ENCODE measurements at regions of chr6 and their contacts with region 1.

Region 1: GRCh38 chr6:43506667-43507471 is 3.3 kb downstream of the LRRC73 start:
- DNase-seq: peak; percentile 51
- ATAC-seq: peak; percentile 87
- H3K4me3 ChIP-seq: no peak overlapping the region
- H3K27ac ChIP-seq: no peak overlapping the region
- H3K4me1 ChIP-seq: peaks cover 4% of the 10 kb centered on the region; the same call in 1 of the 2 replicates
- H3K27me3 ChIP-seq: peaks cover 0 to 2% of the 10 kb centered on the region in 2 experiments; a peak in 1 of 4 replicates
- CTCF ChIP-seq: peak; percentile 91 to 97 (median 96); a peak in 5 of 6 replicates
- EP300 ChIP-seq: no peak
- POLR2A ChIP-seq: no peak
- RAD21 ChIP-seq: peak; percentile 80

Region 2: GRCh38 chr6:42652024-42652746 is 854.7 kb before region 1 on chr6:
- CTCF ChIA-PET with region 1: no interaction called
- POLR2A ChIA-PET with region 1: no interaction called
- RAD21 ChIA-PET with region 1: no interaction called
- SMC1A ChIA-PET with region 1: no interaction called
- in situ Hi-C with region 1: no loop called
- intact Hi-C with region 1: no loop called
- DNase-seq: no peak
- ATAC-seq: no peak
- H3K4me3 ChIP-seq: no peak overlapping the region
- H3K27ac ChIP-seq: no peak overlapping the region
- H3K4me1 ChIP-seq: no peaks in the 10 kb centered on the region
- H3K27me3 ChIP-seq: no peaks in the 10 kb centered on the region
- CTCF ChIP-seq: no peak
- EP300 ChIP-seq: no peak
- POLR2A ChIP-seq: no peak
- RAD21 ChIP-seq: no peak

Region 3: DNA sequence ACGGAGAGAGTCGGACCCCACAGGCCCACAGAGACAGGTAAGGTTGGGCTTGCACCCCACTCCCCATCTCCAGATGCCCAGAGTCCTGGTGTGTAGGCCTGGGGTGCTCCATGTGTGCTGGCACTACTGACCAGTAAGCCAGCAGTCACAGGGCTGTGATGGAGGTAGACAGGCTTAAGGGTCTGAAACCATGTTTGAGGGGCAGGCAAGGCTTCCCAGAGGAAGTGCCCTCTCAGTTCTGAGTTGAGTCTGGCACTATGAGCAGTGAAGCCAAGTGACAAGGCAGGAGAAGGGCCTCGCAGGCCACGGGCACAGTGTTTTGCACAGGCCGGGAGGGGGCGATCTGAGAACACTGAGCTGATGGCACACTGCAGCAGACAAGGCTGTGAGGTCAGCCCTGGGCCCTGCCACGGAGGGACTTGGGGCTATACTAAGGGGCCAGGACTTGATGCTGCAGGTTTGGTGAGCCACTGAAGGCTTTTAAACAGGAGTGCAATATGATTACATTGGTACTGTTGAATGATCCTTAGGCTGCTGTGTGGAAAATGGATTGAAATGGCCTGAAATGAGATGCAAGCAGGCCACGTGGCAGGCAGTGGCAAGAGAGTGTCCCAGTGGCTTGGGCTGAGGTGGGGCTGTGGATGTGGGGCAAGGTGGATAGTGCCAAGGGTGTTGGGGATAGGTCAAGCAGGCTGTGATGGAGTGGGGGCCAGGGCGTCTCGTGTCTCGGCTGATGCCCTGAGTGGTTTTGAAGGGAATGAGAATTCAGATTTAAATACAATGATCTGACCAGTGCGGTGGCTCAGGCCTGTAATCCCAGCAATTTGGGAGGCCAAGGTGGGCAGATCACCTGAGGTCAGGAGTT is 243.3 kb before region 1 on chr6:
- CTCF ChIA-PET with region 1: interaction called, 33 read pairs
- POLR2A ChIA-PET with region 1: interaction called, 3 read pairs
- RAD21 ChIA-PET with region 1: interaction called, 44 read pairs
- SMC1A ChIA-PET with region 1: interaction called, 16 read pairs
- in situ Hi-C with region 1: loop called (anchors 5 kb)
- intact Hi-C with region 1: loop called (anchors 1 kb)
- DNase-seq: peak; percentile 46
- ATAC-seq: peak; percentile 99
- H3K4me3 ChIP-seq: no peak overlapping the region
- H3K27ac ChIP-seq: no peak overlapping the region
- H3K4me1 ChIP-seq: peaks cover 2% of the 10 kb centered on the region; the same call in 1 of the 2 replicates
- H3K27me3 ChIP-seq: no peaks in the 10 kb centered on the region; a peak in 1 of 4 replicates
- CTCF ChIP-seq: peak; percentile 94 to 97 (median 97)
- EP300 ChIP-seq: no peak
- POLR2A ChIP-seq: no peak
- RAD21 ChIP-seq: peak; percentile 93

Region 4: GRCh38 chr6:43308101-43308989 is 198.5 kb before region 1 on chr6 and contains the start of gene CRIP3:
- CTCF ChIA-PET with region 1: interaction called, 19 read pairs
- POLR2A ChIA-PET with region 1: no interaction called
- RAD21 ChIA-PET with region 1: interaction called, 3 read pairs
- SMC1A ChIA-PET with region 1: no interaction called
- in situ Hi-C with region 1: no loop called
- intact Hi-C with region 1: no loop called
- DNase-seq: no peak
- ATAC-seq: peak; percentile 92
- H3K4me3 ChIP-seq: peak within 1 kb of the TSS; percentile 57; the same call in 1 of the 2 replicates
- H3K27ac ChIP-seq: no peak within 1 kb of the TSS
- H3K4me1 ChIP-seq: peaks cover 8% of the 10 kb centered on the region
- H3K27me3 ChIP-seq: no peaks in the 10 kb centered on the region
- CTCF ChIP-seq: peak; percentile 49 to 79 (median 50)
- EP300 ChIP-seq: no peak
- POLR2A ChIP-seq: no peak
- RAD21 ChIP-seq: 0 out of 2 replicates have a peak, but pooled peaks have one; percentile 8
- polyA plus RNA-seq, gene CRIP3: 1.7 to 2.3 TPM

Region 5: DNA sequence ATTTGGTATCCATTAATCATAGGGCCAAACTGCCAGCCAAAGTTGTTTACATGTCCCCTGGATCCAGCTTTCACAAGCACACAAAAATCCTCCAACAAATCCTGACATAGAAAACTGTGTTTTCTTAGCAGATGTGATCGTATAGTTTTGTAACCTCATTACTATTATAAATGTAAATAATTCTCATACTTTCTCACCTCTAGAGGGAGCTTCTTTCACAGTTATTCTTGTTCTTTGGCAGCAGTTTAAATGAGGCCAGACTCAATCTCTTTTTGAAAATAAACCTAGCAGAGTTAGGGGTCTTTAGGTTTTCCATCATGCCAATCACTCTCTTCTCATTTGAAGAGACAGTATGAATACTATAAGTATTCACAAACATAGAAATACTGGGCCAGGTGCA is 120.4 kb before region 1 on chr6:
- CTCF ChIA-PET with region 1: interaction called, 26 read pairs
- POLR2A ChIA-PET with region 1: interaction called, 3 read pairs
- RAD21 ChIA-PET with region 1: interaction called, 11 read pairs
- SMC1A ChIA-PET with region 1: interaction called, 6 read pairs
- in situ Hi-C with region 1: no loop called
- intact Hi-C with region 1: loop called (anchors 5 kb)
- DNase-seq: no peak
- ATAC-seq: no peak
- H3K4me3 ChIP-seq: no peak overlapping the region
- H3K27ac ChIP-seq: peak overlapping the region; percentile 86; the same call in 1 of the 2 replicates
- H3K4me1 ChIP-seq: peaks cover 41% of the 10 kb centered on the region
- H3K27me3 ChIP-seq: no peaks in the 10 kb centered on the region
- CTCF ChIP-seq: peak; percentile 20 to 47 (median 39); a peak in 4 of 6 replicates
- EP300 ChIP-seq: no peak
- POLR2A ChIP-seq: no peak
- RAD21 ChIP-seq: peak; percentile 54; the same call in 1 of the 2 replicates

Region 6: GRCh38 chr6:43454696-43455530 is 52.0 kb before region 1 on chr6:
- CTCF ChIA-PET with region 1: interaction called, 27 read pairs
- POLR2A ChIA-PET with region 1: interaction called, 3 read pairs
- RAD21 ChIA-PET with region 1: interaction called, 22 read pairs
- SMC1A ChIA-PET with region 1: interaction called, 6 read pairs
- in situ Hi-C with region 1: no loop called
- intact Hi-C with region 1: loop called (anchors 2 kb)
- DNase-seq: no peak
- ATAC-seq: peak; percentile 92
- H3K4me3 ChIP-seq: peak overlapping the region; percentile 80; the same call in 1 of the 2 replicates
- H3K27ac ChIP-seq: no peak overlapping the region
- H3K4me1 ChIP-seq: peaks cover 14% of the 10 kb centered on the region
- H3K27me3 ChIP-seq: peaks cover 2 to 3% of the 10 kb centered on the region in 2 experiments; a peak in 3 of 4 replicates
- CTCF ChIP-seq: no peak
- EP300 ChIP-seq: no peak
- POLR2A ChIP-seq: 0 out of 2 replicates have a peak, but pooled peaks have one; percentile 38
- RAD21 ChIP-seq: no peak

Region 7: GRCh38 chr6:43496370-43497128 is 10.3 kb before region 1 on chr6:
- CTCF ChIA-PET with region 1: interaction called, 70 read pairs
- POLR2A ChIA-PET with region 1: no interaction called
- RAD21 ChIA-PET with region 1: interaction called, 8 read pairs
- SMC1A ChIA-PET with region 1: interaction called, 5 read pairs
- in situ Hi-C with region 1: no loop called
- intact Hi-C with region 1: no loop called
- DNase-seq: no peak
- ATAC-seq: peak; percentile 77
- H3K4me3 ChIP-seq: no peak overlapping the region
- H3K27ac ChIP-seq: no peak overlapping the region
- H3K4me1 ChIP-seq: no peaks in the 10 kb centered on the region
- H3K27me3 ChIP-seq: no peaks in the 10 kb centered on the region
- CTCF ChIP-seq: peak; percentile 53 to 56 (median 55)
- EP300 ChIP-seq: no peak
- POLR2A ChIP-seq: no peak
- RAD21 ChIP-seq: peak; percentile 60

Region 8: DNA sequence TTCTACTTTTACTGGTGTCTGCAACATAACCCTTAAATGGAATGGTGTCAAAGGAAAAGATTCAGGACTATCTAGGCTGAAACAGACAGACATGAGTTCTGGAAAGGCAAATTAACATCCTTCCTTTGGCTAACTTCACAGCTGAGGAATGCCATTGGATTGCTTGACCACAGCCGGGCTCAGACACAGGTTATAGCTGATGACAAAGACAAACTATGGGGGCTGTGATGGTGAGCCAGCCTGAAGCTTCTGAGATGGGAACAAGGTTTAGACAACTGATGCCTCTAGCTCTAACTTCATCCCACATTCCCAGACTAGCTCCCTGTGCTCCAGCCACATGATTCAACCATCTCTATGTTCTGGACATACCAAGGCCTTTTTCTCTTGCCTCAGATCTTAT is 25.3 kb after region 1 on chr6:
- CTCF ChIA-PET with region 1: interaction called, 11 read pairs
- POLR2A ChIA-PET with region 1: no interaction called
- RAD21 ChIA-PET with region 1: no interaction called
- SMC1A ChIA-PET with region 1: no interaction called
- in situ Hi-C with region 1: no loop called
- intact Hi-C with region 1: no loop called
- DNase-seq: no peak
- ATAC-seq: no peak
- H3K4me3 ChIP-seq: no peak overlapping the region
- H3K27ac ChIP-seq: no peak overlapping the region
- H3K4me1 ChIP-seq: no peaks in the 10 kb centered on the region
- H3K27me3 ChIP-seq: no peaks in the 10 kb centered on the region
- CTCF ChIP-seq: no peak
- EP300 ChIP-seq: no peak
- POLR2A ChIP-seq: no peak
- RAD21 ChIP-seq: no peak

Measured in GM12878 (cell line).